K562 (cell line): ENCODE measurements at regions of chr2 and their contacts with region 1.

Region 1: GRCh38 chr2:113248997-113249770 is 29.5 kb downstream of the PAX8 start:
- DNase-seq: peak; percentile 78 to 85 (median 82)
- ATAC-seq: peak; percentile 94
- H3K4me3 ChIP-seq: no peak overlapping the region
- H3K27ac ChIP-seq: no peak overlapping the region
- H3K4me1 ChIP-seq: peaks cover 0 to 20% of the 10 kb centered on the region in 2 experiments; a peak in 4 of 5 replicates
- H3K27me3 ChIP-seq: no peaks in the 10 kb centered on the region
- CTCF ChIP-seq: peak; percentile 87 to 91 (median 88)
- EP300 ChIP-seq: no peak
- POLR2A ChIP-seq: no peak
- RAD21 ChIP-seq: peak; percentile 56 to 83

Region 2: DNA sequence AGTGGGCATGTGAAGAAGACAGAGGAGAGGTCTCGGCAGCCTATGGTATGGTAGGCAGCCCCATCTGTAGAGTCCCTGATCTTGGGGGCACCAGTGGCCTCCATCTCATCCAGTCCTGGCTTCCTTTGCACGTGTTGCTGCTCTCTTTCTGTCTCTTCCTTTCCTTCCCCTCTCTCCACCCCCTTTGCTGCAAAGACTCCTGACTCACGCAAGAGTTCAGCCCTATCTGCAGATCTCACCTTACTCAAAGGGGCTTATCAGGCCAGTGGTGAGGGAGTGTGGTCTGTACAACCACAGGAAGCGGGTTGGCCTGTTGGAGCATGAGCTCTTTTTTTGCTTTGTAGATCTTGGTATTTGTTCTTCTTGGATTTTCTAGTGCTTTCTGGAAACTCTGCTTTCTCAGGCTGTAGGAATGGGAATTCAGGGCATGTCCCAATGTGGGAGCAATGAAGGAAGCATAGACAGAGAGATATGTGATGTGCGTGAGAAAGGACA is 543.0 kb before region 1 on chr2:
- CTCF ChIA-PET with region 1: no interaction called
- POLR2A ChIA-PET with region 1: no interaction called
- in situ Hi-C with region 1: no loop called
- intact Hi-C with region 1: no loop called
- DNase-seq: peak; percentile 92 to 97 (median 94)
- ATAC-seq: peak; percentile 96
- H3K4me3 ChIP-seq: no peak overlapping the region
- H3K27ac ChIP-seq: peak overlapping the region; percentile 73
- H3K4me1 ChIP-seq: peaks cover 32 to 56% of the 10 kb centered on the region in 2 experiments
- H3K27me3 ChIP-seq: no peaks in the 10 kb centered on the region
- CTCF ChIP-seq: peak in 1 of 3 experiments; percentile 3; a peak in 1 of 6 replicates
- EP300 ChIP-seq: peak; percentile 98
- POLR2A ChIP-seq: peak; percentile 68
- RAD21 ChIP-seq: peak; percentile 34

Region 3: DNA sequence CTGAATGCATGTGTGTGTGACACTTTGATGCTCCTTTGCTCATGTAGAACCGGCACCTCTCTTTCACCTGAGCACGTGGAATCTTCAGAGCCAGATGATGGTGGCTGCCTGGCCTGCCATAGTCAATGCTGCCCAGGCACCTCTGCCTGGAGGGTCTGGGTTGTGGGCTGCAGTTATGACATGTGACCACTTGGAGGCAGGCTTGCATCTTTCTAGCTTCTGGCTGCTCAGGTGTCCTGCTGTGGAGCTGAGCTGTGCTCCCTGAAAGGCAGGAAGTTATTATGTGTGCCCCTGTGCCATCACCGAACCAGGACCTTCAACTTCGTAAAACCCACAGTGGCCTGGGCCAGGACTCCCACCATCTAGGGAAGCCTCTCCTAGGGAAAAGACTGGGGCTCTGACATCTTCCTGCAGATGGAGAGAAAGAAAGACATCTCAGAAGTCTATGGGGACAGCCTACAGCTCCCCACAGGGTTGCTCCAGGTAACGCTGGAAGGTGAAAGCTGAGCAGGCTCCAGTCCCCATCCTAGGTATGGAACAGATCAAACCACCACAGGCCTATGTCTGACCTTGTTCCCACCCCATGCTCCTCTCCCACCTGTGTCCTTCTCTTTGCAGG is 45.2 kb before region 1 on chr2:
- CTCF ChIA-PET with region 1: interaction called, 8 read pairs
- POLR2A ChIA-PET with region 1: interaction called, 3 read pairs
- in situ Hi-C with region 1: no loop called
- intact Hi-C with region 1: loop called (anchors 2 kb)
- DNase-seq: peak; percentile 80 to 82 (median 80)
- ATAC-seq: peak; percentile 97
- H3K4me3 ChIP-seq: no peak overlapping the region
- H3K27ac ChIP-seq: no peak overlapping the region
- H3K4me1 ChIP-seq: no peaks in the 10 kb centered on the region
- H3K27me3 ChIP-seq: peaks cover 2 to 13% of the 10 kb centered on the region in 2 experiments; a peak in 3 of 5 replicates
- CTCF ChIP-seq: peak; percentile 88 to 95 (median 92)
- EP300 ChIP-seq: no peak
- POLR2A ChIP-seq: no peak
- RAD21 ChIP-seq: peak; percentile 83 to 88

Region 4: GRCh38 chr2:113324684-113325160 is 75.5 kb after region 1 on chr2:
- CTCF ChIA-PET with region 1: no interaction called
- POLR2A ChIA-PET with region 1: no interaction called
- in situ Hi-C with region 1: no loop called
- intact Hi-C with region 1: no loop called
- DNase-seq: peak; percentile 64 to 88 (median 86)
- ATAC-seq: peak; percentile 96
- H3K4me3 ChIP-seq: no peak overlapping the region
- H3K27ac ChIP-seq: no peak overlapping the region
- H3K4me1 ChIP-seq: peaks cover 0 to 4% of the 10 kb centered on the region in 2 experiments; a peak in 2 of 5 replicates
- H3K27me3 ChIP-seq: peaks cover 0 to 35% of the 10 kb centered on the region in 2 experiments; a peak in 4 of 5 replicates
- CTCF ChIP-seq: no peak
- EP300 ChIP-seq: no peak
- POLR2A ChIP-seq: no peak
- RAD21 ChIP-seq: no peak

Region 5: GRCh38 chr2:113716291-113716690 is 467.1 kb after region 1 on chr2:
- CTCF ChIA-PET with region 1: no interaction called
- POLR2A ChIA-PET with region 1: no interaction called
- in situ Hi-C with region 1: no loop called
- intact Hi-C with region 1: no loop called
- DNase-seq: no peak
- ATAC-seq: peak; percentile 36; the same call in 2 of the 3 replicates
- H3K4me3 ChIP-seq: no peak overlapping the region
- H3K27ac ChIP-seq: no peak overlapping the region
- H3K4me1 ChIP-seq: no peaks in the 10 kb centered on the region
- H3K27me3 ChIP-seq: no peaks in the 10 kb centered on the region
- CTCF ChIP-seq: no peak
- EP300 ChIP-seq: no peak
- POLR2A ChIP-seq: no peak
- RAD21 ChIP-seq: no peak